ENCODE measurements at regions of chr6 and their contacts with region 1.

Region 1: DNA sequence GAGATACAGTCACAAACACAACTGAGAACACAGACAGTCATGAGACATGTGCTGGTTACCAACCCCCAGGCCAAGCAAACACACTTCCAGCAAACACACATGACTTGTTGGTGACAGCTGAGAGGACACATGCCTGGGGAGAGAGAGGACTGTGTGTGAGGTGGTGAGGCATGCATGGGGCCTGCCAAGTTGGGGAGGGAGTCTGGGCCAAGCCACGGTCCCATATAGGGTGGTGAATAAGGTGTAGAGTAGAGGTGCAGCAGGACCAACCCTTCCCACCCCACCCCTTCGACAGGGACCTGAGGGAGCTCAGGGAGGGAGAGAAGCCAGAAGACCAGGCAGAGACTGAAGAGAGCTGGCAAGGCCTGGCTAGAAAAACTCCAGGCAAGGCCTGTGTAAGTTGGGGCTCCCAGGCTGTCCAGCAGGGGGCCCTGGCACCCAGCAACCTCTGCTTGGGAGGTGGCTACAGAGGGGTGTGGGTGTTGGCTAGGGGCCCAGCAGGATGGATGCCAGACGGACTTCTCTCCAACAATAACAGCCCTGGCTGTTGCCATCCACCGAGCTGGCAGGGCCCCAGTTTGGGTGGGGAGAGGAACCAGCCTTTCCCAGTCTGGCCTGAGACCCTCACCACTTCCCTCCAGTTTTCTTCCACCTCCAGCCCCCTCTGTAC is 2.0 kb upstream of the SLC29A1 start:
- DNase-seq: peak; percentile 96 to 97
- H3K4me3 ChIP-seq: peak overlapping the region; percentile 71 to 94
- H3K27ac ChIP-seq: peak overlapping the region; percentile 95 to 99
- H3K4me1 ChIP-seq: peaks cover 44 to 69% of the 10 kb centered on the region in 2 donors
- H3K27me3 ChIP-seq: no peaks in the 10 kb centered on the region
- CTCF ChIP-seq: peak; percentile 84 to 91 (median 86)

Region 2: DNA sequence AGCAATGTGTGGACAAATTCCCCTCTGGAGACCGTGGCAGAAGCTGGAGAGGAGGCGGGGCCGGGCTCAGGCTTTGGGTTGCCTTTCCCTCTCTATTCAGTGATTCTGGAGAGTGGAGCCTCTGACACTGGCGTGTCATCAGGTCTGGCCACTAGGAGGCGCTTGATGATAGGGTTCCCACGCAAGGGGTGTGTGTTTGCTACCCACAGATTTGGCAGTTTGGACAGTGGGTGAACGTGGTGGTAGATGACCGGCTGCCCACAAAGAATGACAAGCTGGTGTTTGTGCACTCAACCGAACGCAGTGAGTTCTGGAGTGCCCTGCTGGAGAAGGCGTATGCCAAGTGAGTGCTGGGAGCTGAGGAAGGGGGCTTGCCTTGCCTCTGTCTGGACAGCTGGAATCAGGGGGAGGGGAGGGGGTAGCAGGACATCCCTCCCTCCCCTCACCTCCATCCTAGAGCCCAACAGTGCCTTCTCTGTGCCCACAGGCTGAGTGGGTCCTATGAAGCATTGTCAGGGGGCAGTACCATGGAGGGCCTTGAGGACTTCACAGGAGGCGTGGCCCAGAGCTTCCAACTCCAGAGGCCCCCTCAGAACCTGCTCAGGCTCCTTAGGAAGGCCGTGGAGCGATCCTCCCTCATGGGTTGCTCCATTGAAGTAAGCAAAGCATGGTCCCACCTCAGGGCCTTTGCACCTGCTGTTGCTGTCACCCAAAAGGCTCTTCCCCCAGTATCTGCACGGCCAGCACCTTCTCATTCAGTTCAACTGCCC is 48.5 kb before region 1 on chr6:
- intact Hi-C with region 1: loop called (anchors 1 kb)
- DNase-seq: peak; percentile 61 to 95
- H3K4me3 ChIP-seq: no peak overlapping the region
- H3K27ac ChIP-seq: no peak overlapping the region
- H3K4me1 ChIP-seq: peaks cover 3 to 14% of the 10 kb centered on the region in 2 donors
- H3K27me3 ChIP-seq: no peaks in the 10 kb centered on the region
- CTCF ChIP-seq: peak; percentile 93 to 94 (median 93)

Region 3: DNA sequence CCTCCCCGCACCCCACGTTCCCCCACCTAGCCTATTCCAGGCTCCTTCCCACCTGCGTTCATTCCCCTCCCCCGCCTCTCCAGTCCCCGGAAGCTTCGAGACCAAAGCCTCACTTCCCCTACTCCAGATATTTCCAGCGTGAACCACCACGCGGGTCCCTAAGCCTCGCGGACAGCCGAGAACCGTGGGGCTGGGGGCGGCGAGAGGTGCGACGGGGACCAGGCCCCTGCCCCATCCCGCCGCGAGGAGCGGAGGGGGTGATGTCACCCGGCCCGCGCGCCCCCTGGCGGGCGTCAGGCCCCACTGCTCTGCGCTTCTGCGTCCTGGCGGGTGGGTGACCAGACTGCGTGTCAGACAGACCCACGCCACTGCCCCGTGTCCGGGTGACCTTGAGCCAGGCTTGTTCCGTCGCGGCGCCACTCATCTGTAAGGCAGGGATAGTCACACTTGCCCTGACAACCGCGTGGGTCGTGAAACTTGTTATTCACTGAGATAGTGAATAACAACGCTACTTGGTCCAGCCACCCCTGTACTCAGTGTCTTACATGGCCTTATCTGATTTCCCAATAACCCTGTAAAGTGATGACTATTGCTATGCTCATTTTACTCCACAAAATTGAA is 16.5 kb after region 1 on chr6:
- intact Hi-C with region 1: loop called (anchors 1 kb)
- DNase-seq: peak; percentile 72 to 93
- H3K4me3 ChIP-seq: peak overlapping the region; percentile 51 to 79
- H3K27ac ChIP-seq: peak overlapping the region; percentile 97 to 100
- H3K4me1 ChIP-seq: peaks cover 25 to 50% of the 10 kb centered on the region in 2 donors
- H3K27me3 ChIP-seq: no peaks in the 10 kb centered on the region
- CTCF ChIP-seq: peak; percentile 97 to 99 (median 98)

Region 4: GRCh38 chr6:44257025-44257752 is 35.8 kb after region 1 on chr6 and contains the start of gene SLC35B2:
- intact Hi-C with region 1: loop called (anchors 2 kb)
- DNase-seq: peak in 1 of 2 donors; percentile 81
- H3K4me3 ChIP-seq: peak within 1 kb of the TSS; percentile 77 to 79
- H3K27ac ChIP-seq: peak within 1 kb of the TSS; percentile 73 to 87
- H3K4me1 ChIP-seq: peaks cover 0 to 13% of the 10 kb centered on the region in 2 donors
- H3K27me3 ChIP-seq: no peaks in the 10 kb centered on the region
- CTCF ChIP-seq: peak in 2 of 3 experiments; percentile 51 to 93
- total RNA-seq, gene SLC35B2: 9.9 TPM